OCI-LY7 (cell line): ENCODE measurements at regions of chr16 and their contacts with region 1.

Region 1: GRCh38 chr16:81778861-81779535 is at the start of gene PLCG2:
- DNase-seq: peak; percentile 85
- H3K4me3 ChIP-seq: peak within 1 kb of the TSS; percentile 85
- H3K27ac ChIP-seq: peak within 1 kb of the TSS; percentile 92
- H3K4me1 ChIP-seq: peaks cover 85% of the 10 kb centered on the region
- CTCF ChIP-seq: no peak
- total RNA-seq, gene PLCG2: 196 and 198 TPM in 2 replicates

Region 2: GRCh38 chr16:81758376-81758775 is 20.6 kb before region 1 on chr16:
- CTCF ChIA-PET with region 1: no interaction called
- POLR2A ChIA-PET with region 1: interaction called, 37 read pairs
- intact Hi-C with region 1: loop called (anchors 2 kb)
- DNase-seq: no peak
- H3K4me3 ChIP-seq: no peak overlapping the region
- H3K27ac ChIP-seq: no peak overlapping the region
- H3K4me1 ChIP-seq: peaks cover 7% of the 10 kb centered on the region
- CTCF ChIP-seq: no peak

Region 3: DNA sequence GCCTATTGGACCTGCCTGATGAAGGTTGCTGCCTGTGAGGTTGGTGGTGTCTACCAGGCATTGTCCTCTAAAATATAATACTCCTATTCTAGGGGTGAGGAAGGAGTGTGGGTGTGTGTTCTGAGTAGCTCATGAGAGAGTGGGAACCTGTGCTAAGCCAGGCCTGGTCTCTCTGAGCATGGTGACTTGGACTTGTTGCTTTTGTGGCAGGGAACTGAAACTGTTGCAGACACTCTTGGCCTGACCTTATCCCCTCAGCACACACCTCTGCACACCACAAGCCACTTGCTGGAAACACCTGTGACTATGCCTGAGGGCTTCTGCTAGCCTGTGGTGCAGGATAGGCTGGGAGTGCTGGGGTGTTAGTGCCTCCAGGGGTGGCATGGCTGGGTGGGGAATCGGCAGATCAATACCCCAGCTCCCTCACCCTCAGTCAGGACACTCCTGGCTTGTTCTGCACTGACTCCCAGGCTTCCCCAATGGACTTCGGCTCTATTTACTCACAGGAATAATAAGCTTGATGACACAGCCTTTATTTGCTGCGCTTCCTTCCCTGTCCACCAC is 30.0 kb after region 1 on chr16:
- CTCF ChIA-PET with region 1: interaction called, 3 read pairs
- POLR2A ChIA-PET with region 1: interaction called, 26 read pairs
- intact Hi-C with region 1: no loop called
- DNase-seq: peak; percentile 95
- H3K4me3 ChIP-seq: peak overlapping the region; percentile 50
- H3K27ac ChIP-seq: peak overlapping the region; percentile 95
- H3K4me1 ChIP-seq: peaks cover 92% of the 10 kb centered on the region
- CTCF ChIP-seq: no peak

Region 4: GRCh38 chr16:81831722-81832126 is 52.7 kb after region 1 on chr16:
- CTCF ChIA-PET with region 1: no interaction called
- POLR2A ChIA-PET with region 1: interaction called, 11 read pairs
- intact Hi-C with region 1: no loop called
- DNase-seq: peak; percentile 95
- H3K4me3 ChIP-seq: peak overlapping the region; percentile 70
- H3K27ac ChIP-seq: peak overlapping the region; percentile 97
- H3K4me1 ChIP-seq: peaks cover 97% of the 10 kb centered on the region
- CTCF ChIP-seq: peak; percentile 54